Activated CD8-positive, alpha-beta memory T cell treated with anti-CD3 and anti-CD28 coated beads, Interleukin-2, amount 10 ng/mL, durations not matched to agents 7 days and 5 days (primary cell): ENCODE measurements at regions of chr2 and their contacts with region 1.

Region 1: GRCh38 chr2:33475224-33476130 is 972 bp upstream of the RASGRP3 start:
- DNase-seq: peak; percentile 91
- ATAC-seq: peak; percentile 78
- H3K4me3 Mint-ChIP-seq: peak overlapping the region; percentile 91
- H3K27ac Mint-ChIP-seq: peak overlapping the region; percentile 99
- H3K4me1 Mint-ChIP-seq: peaks cover 32% of the 10 kb centered on the region
- H3K27me3 Mint-ChIP-seq: peaks cover 5% of the 10 kb centered on the region

Region 2: DNA sequence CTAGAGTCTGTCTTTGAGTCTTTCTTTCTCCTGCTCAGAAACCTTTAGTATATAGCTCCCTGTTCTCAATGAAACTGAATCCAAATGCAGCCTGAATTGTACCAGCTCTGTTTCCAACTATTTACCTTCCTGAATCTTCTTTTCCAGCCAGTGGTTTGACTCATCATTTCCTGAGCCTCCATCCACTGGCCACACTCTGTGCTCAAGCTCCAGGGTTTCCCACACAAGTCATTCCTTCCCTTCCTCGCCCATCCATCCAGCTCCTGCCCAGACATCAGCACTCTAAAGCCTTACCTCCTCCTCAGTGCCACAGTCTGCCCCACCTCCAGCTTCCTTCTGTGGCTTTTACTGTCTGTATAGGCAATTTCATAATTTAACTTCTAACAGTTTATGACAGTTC is 232.6 kb before region 1 on chr2:
- CTCF ChIA-PET with region 1: no interaction called
- DNase-seq: no peak
- ATAC-seq: no peak
- H3K4me3 Mint-ChIP-seq: no peak overlapping the region
- H3K27ac Mint-ChIP-seq: no peak overlapping the region
- H3K4me1 Mint-ChIP-seq: no peaks in the 10 kb centered on the region
- H3K27me3 Mint-ChIP-seq: peaks cover 19% of the 10 kb centered on the region

Region 3: GRCh38 chr2:33497221-33497650 is 21.8 kb after region 1 on chr2:
- CTCF ChIA-PET with region 1: interaction called, 14 read pairs
- DNase-seq: no peak
- ATAC-seq: peak; percentile 82
- H3K4me3 Mint-ChIP-seq: no peak overlapping the region
- H3K27ac Mint-ChIP-seq: peak overlapping the region; percentile 66
- H3K4me1 Mint-ChIP-seq: peaks cover 58% of the 10 kb centered on the region
- H3K27me3 Mint-ChIP-seq: peaks cover 4% of the 10 kb centered on the region

Region 4: GRCh38 chr2:33583194-33583938 is 107.9 kb after region 1 on chr2:
- CTCF ChIA-PET with region 1: interaction called, 46 read pairs
- DNase-seq: no peak
- ATAC-seq: peak; percentile 53
- H3K4me3 Mint-ChIP-seq: no peak overlapping the region
- H3K27ac Mint-ChIP-seq: no peak overlapping the region
- H3K4me1 Mint-ChIP-seq: peaks cover 13% of the 10 kb centered on the region
- H3K27me3 Mint-ChIP-seq: no peaks in the 10 kb centered on the region

Region 5: DNA sequence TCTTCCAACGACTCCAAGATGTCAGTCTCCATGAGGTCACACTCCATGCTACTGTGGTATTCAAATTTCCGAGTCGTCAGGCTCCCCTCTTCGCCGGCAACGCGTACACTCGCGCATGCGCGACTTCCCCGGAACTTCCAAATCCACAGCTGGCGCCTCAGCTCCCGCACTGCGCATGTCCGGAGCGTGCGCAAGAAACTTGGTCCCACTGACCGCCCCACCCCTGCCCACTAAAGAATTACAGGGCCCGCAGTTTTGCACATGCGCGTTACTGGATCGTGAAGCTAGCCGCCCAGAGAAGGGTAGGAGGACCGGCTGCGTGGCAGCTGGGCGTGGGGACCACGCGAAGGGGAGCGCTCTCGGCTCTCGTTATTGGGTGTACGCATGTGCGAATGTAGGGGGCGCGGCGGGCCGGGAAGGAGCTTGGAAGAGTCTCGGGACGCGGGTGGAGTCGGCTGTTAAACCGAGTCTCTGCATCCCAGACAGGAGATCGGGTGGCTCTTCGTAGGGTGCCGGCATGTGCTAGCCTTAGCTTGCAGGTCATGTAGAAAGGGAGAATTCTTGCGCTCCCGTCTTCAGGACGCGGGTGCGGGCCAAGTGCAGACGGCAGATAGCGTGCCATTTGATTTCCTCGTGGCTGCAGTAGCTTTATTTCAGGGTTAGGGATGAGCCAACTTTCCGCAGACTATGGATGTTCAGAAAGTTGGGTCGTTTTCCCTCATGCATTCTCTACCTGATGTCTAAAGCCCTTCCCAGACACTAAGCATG is 123.9 kb after region 1 on chr2 and contains the start of gene FAM98A:
- CTCF ChIA-PET with region 1: interaction called, 15 read pairs
- DNase-seq: peak; percentile 99
- ATAC-seq: peak; percentile 92
- H3K4me3 Mint-ChIP-seq: peak within 1 kb of the TSS; percentile 86
- H3K27ac Mint-ChIP-seq: peak within 1 kb of the TSS; percentile 85
- H3K4me1 Mint-ChIP-seq: peaks cover 26% of the 10 kb centered on the region
- H3K27me3 Mint-ChIP-seq: no peaks in the 10 kb centered on the region
- total RNA-seq, gene FAM98A: 36.1 to 51.7 TPM